Head of caudate nucleus (tissue), 42 donors: ENCODE measurements at regions of chr4 and their contacts with region 1.

Region 1: GRCh38 chr4:88211473-88212252 is 53.2 kb upstream of the ABCG2 start:
- DNase-seq: peak in 28 of 42 donors; percentile 9 to 86 (median 66)

Region 2: GRCh38 chr4:87476934-87477333 is 734.7 kb before region 1 on chr4:
- intact Hi-C with region 1: no loop called
- DNase-seq: no peak

Region 3: GRCh38 chr4:87679449-87680169 is 532.1 kb before region 1 on chr4:
- intact Hi-C with region 1: loop called (anchors 5 kb)
- DNase-seq: peak; percentile 14 to 87 (median 69)

Region 4: GRCh38 chr4:87848622-87849351 is 362.9 kb before region 1 on chr4:
- intact Hi-C with region 1: loop called (anchors 10 kb)
- DNase-seq: peak in 41 of 42 donors; percentile 35 to 89 (median 74)

Region 5: GRCh38 chr4:88033309-88033708 is 178.4 kb before region 1 on chr4:
- intact Hi-C with region 1: loop called (anchors 5 kb)
- DNase-seq: peak in 17 of 42 donors; percentile 13 to 71 (median 37)

Region 6: GRCh38 chr4:88284439-88285234 is 73.0 kb after region 1 on chr4 and contains the start of gene PPM1K:
- intact Hi-C with region 1: loop called (anchors 5 kb)
- DNase-seq: peak; percentile 98 to 100 (median 99)

Region 7: GRCh38 chr4:88398381-88398780 is 186.7 kb after region 1 on chr4:
- intact Hi-C with region 1: no loop called
- DNase-seq: no peak

Region 8: GRCh38 chr4:88456757-88457306 is 245.2 kb after region 1 on chr4 and contains the start of gene HERC5:
- intact Hi-C with region 1: loop called (anchors 5 kb)
- DNase-seq: peak; percentile 61 to 92 (median 79)

Region 9: GRCh38 chr4:88517825-88518224 is 306.2 kb after region 1 on chr4:
- intact Hi-C with region 1: loop called (anchors 2 kb)
- DNase-seq: no peak